ENCODE measurements at regions of chr7 and their contacts with region 1.

Region 1: GRCh38 chr7:37495574-37496184 is 47.0 kb upstream of the ELMO1 start:
- DNase-seq: peak; percentile 29
- H3K4me3 ChIP-seq: no peak overlapping the region
- H3K27ac ChIP-seq: no peak overlapping the region
- H3K4me1 ChIP-seq: no peaks in the 10 kb centered on the region
- CTCF ChIP-seq: peak; percentile 82

Region 2: GRCh38 chr7:37234928-37235327 is 260.8 kb before region 1 on chr7:
- CTCF ChIA-PET with region 1: no interaction called
- POLR2A ChIA-PET with region 1: no interaction called
- intact Hi-C with region 1: loop called (anchors 2 kb)
- DNase-seq: peak; percentile 48
- H3K4me3 ChIP-seq: no peak overlapping the region
- H3K27ac ChIP-seq: no peak overlapping the region
- H3K4me1 ChIP-seq: no peaks in the 10 kb centered on the region
- CTCF ChIP-seq: peak; percentile 82

Region 3: GRCh38 chr7:37516610-37517108 is 21.0 kb after region 1 on chr7:
- CTCF ChIA-PET with region 1: no interaction called
- POLR2A ChIA-PET with region 1: no interaction called
- intact Hi-C with region 1: no loop called
- DNase-seq: no peak
- H3K4me3 ChIP-seq: no peak overlapping the region
- H3K27ac ChIP-seq: no peak overlapping the region
- H3K4me1 ChIP-seq: no peaks in the 10 kb centered on the region
- CTCF ChIP-seq: no peak

Region 4: GRCh38 chr7:37833107-37833817 is 337.6 kb after region 1 on chr7:
- CTCF ChIA-PET with region 1: no interaction called
- POLR2A ChIA-PET with region 1: no interaction called
- intact Hi-C with region 1: no loop called
- DNase-seq: peak; percentile 38
- H3K4me3 ChIP-seq: no peak overlapping the region
- H3K27ac ChIP-seq: no peak overlapping the region
- H3K4me1 ChIP-seq: no peaks in the 10 kb centered on the region
- CTCF ChIP-seq: peak; percentile 78

Measured in OCI-LY7 (cell line).